Caco-2 (cell line): ENCODE measurements at regions of chr10 and their contacts with region 1.

Region 1: DNA sequence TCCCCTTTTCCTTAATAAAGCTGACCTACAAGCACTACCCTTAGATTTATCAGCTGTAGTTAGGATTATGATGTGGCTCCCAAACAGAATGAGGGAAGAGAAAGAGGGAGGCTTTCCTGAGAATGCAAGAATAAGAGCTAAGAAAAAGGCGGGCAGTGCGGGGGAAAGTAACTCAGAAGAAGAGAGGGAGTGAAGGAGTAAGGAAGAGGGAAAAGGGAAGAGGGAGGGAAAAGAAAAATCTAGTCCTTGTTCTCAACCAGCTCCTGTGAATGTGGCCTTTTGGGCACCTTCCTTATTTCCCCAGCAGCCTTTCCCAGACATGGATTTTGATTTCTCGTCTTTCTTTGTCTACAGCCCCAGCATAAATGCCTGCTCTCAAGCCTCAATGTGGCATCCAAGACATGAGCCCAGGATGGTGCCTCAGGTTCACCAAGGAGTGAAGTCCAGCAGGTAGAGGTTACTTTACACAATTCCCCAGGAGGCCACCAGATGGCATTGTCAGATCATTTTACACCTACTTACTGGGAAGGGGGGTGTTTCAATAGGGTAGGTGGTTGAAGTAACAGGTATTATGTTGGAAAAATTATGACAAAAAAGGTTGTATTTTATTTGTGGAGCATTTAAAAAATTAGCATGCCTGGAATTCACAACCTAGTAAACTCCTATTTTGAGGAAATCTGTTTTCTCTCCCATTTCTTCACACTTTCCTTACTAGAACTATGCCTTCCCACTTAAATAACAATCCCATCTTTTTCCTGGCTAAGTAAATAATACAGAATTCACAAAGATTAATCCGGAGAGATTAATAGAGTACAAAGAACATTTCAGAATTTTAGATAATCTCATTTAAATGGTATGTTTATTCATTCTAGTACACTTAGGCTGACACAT is 106.5 kb downstream of the HTR7 start:
- DNase-seq: peak; percentile 52 to 70
- H3K4me3 ChIP-seq: no peak overlapping the region
- H3K4me3 Mint-ChIP-seq: no peak overlapping the region
- H3K27ac Mint-ChIP-seq: no peak overlapping the region
- H3K4me1 ChIP-seq: no peaks in the 10 kb centered on the region
- H3K4me1 Mint-ChIP-seq: no peaks in the 10 kb centered on the region
- H3K27me3 ChIP-seq: no peaks in the 10 kb centered on the region
- H3K27me3 Mint-ChIP-seq: peaks cover 10% of the 10 kb centered on the region
- CTCF ChIP-seq: peak; percentile 80 to 82

Region 2: DNA sequence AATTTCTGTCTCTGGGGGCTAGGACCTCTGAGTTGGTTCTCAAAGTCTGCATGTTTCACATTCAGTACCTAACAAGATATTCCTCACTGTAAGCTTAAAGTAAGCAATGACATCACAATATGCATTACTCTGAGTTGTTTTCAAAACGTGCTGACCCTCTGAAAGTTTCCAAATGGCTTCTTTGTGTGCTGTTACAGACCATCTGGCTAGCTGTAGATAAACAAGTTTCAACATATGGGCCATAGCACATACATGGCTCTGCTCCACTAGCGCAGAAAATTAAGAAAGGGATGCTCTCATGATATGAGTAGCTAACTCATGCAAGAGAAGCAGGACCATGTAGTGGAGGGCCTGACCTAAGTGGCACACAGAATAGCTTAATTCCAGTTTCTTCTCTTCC is 12.5 kb before region 1 on chr10:
- CTCF ChIA-PET with region 1: no interaction called
- POLR2A ChIA-PET with region 1: no interaction called
- intact Hi-C with region 1: no loop called
- DNase-seq: no peak
- H3K4me3 ChIP-seq: no peak overlapping the region
- H3K4me3 Mint-ChIP-seq: no peak overlapping the region
- H3K27ac Mint-ChIP-seq: no peak overlapping the region
- H3K4me1 ChIP-seq: no peaks in the 10 kb centered on the region
- H3K4me1 Mint-ChIP-seq: no peaks in the 10 kb centered on the region
- H3K27me3 ChIP-seq: no peaks in the 10 kb centered on the region
- H3K27me3 Mint-ChIP-seq: peaks cover 2% of the 10 kb centered on the region
- CTCF ChIP-seq: no peak

Region 3: DNA sequence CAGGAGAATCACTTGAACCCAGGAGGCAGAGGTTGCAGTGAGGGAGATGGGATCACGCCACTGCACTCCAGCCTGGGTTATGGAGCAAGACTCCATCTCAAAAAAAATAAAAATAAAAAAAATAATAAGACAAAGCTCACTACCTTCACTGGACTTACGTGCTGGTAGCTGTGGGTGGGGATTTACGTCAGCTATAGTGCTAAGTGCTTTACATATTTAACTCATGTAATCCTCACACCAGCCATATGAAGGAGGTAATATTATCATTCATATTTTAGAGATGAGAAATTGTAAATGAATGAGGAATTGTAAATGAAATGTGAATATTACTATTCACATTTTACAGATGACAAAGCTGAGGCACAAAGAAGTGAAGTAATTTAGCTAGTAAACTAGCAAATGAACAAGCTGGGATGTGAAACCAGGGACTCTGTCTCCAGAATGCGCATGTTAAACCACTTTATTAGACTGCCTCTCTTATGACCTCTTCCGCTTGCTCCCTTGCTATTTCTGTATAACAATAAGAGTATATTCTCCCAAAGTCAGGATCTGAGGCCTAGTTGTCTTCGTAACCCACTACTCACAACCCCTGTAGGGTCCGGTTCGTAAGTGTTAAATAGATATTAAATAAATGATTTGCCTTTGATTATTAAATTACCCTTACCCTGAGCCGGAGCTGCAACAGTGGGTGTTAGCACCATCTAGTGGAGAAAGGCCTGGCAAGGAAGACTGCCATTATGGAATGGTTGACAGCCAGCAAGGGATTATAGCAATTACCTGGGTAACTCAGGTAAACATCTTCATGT is 36.2 kb after region 1 on chr10:
- CTCF ChIA-PET with region 1: interaction called, 3 read pairs
- POLR2A ChIA-PET with region 1: no interaction called
- intact Hi-C with region 1: loop called (anchors 1 kb)
- DNase-seq: peak in 1 of 2 experiments; percentile 42
- H3K4me3 ChIP-seq: no peak overlapping the region
- H3K4me3 Mint-ChIP-seq: no peak overlapping the region
- H3K27ac Mint-ChIP-seq: no peak overlapping the region
- H3K4me1 ChIP-seq: no peaks in the 10 kb centered on the region
- H3K4me1 Mint-ChIP-seq: no peaks in the 10 kb centered on the region
- H3K27me3 ChIP-seq: no peaks in the 10 kb centered on the region
- H3K27me3 Mint-ChIP-seq: peaks cover 31% of the 10 kb centered on the region
- CTCF ChIP-seq: peak; percentile 51 to 66

Region 4: DNA sequence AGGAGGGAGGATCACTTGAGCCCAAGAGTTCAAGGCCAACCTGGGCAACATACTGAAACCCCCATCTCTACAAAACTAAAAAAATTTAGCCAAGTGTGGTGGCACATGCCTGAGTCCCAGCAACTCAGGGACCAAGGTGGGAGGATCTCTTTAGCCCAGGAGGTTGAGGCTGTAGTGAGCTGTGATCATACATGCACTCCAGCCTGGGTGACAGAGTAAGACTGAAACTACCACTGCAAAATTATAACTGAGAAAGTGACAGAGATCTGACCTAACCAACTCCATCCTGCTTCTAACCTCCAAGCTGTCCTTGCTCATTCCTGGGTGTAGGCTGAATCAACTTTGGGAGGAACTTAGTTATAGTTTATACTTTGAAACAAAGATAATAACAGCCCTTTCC is 47.1 kb after region 1 on chr10:
- CTCF ChIA-PET with region 1: no interaction called
- POLR2A ChIA-PET with region 1: no interaction called
- intact Hi-C with region 1: no loop called
- DNase-seq: no peak
- H3K4me3 ChIP-seq: no peak overlapping the region
- H3K4me3 Mint-ChIP-seq: no peak overlapping the region
- H3K27ac Mint-ChIP-seq: no peak overlapping the region
- H3K4me1 ChIP-seq: no peaks in the 10 kb centered on the region
- H3K4me1 Mint-ChIP-seq: no peaks in the 10 kb centered on the region
- H3K27me3 ChIP-seq: no peaks in the 10 kb centered on the region
- H3K27me3 Mint-ChIP-seq: peaks cover 9% of the 10 kb centered on the region
- CTCF ChIP-seq: no peak

Region 5: GRCh38 chr10:90862908-90863514 is 111.7 kb after region 1 on chr10:
- CTCF ChIA-PET with region 1: interaction called, 5 read pairs
- POLR2A ChIA-PET with region 1: no interaction called
- intact Hi-C with region 1: loop called (anchors 1 kb)
- DNase-seq: peak in 1 of 2 experiments; percentile 33
- H3K4me3 ChIP-seq: no peak overlapping the region
- H3K4me3 Mint-ChIP-seq: no peak overlapping the region
- H3K27ac Mint-ChIP-seq: no peak overlapping the region
- H3K4me1 ChIP-seq: no peaks in the 10 kb centered on the region
- H3K4me1 Mint-ChIP-seq: no peaks in the 10 kb centered on the region
- H3K27me3 ChIP-seq: no peaks in the 10 kb centered on the region
- H3K27me3 Mint-ChIP-seq: peaks cover 18% of the 10 kb centered on the region
- CTCF ChIP-seq: peak; percentile 78 to 80

Region 6: GRCh38 chr10:90871766-90872647 is 120.7 kb after region 1 on chr10 and contains the start of gene RPP30:
- CTCF ChIA-PET with region 1: interaction called, 3 read pairs
- POLR2A ChIA-PET with region 1: no interaction called
- intact Hi-C with region 1: loop called (anchors 1 kb)
- DNase-seq: peak; percentile 85 to 89
- H3K4me3 ChIP-seq: peak within 1 kb of the TSS; percentile 71
- H3K4me3 Mint-ChIP-seq: peak within 1 kb of the TSS; percentile 96
- H3K27ac Mint-ChIP-seq: peak within 1 kb of the TSS; percentile 85
- H3K4me1 ChIP-seq: peaks cover 6% of the 10 kb centered on the region; the same call in 1 of the 2 replicates
- H3K4me1 Mint-ChIP-seq: peaks cover 6% of the 10 kb centered on the region
- H3K27me3 ChIP-seq: no peaks in the 10 kb centered on the region
- H3K27me3 Mint-ChIP-seq: peaks cover 3% of the 10 kb centered on the region
- CTCF ChIP-seq: no peak
- total RNA-seq, gene RPP30: 66.5 and 67.6 TPM in 2 replicates